Ovary (tissue), 10 donors: ENCODE measurements at regions of chr22 and their contacts with region 1.

Region 1: GRCh38 chr22:32325416-32325801 is 32.3 kb upstream of the RFPL3 start:
- DNase-seq: peak in 1 of 5 donors; percentile 56
- H3K4me3 ChIP-seq: no peak overlapping the region
- H3K27ac ChIP-seq: no peak overlapping the region
- H3K4me1 ChIP-seq: no peaks in the 10 kb centered on the region
- H3K27me3 ChIP-seq: no peaks in the 10 kb centered on the region
- CTCF ChIP-seq: no peak
- EP300 ChIP-seq: no peak
- POLR2A ChIP-seq: no peak

Region 2: GRCh38 chr22:32343941-32344340 is 18.5 kb after region 1 on chr22:
- intact Hi-C with region 1: loop called in 1 of 4 experiments (anchors 2 kb)
- DNase-seq: no peak
- H3K4me3 ChIP-seq: no peak overlapping the region
- H3K27ac ChIP-seq: no peak overlapping the region
- H3K4me1 ChIP-seq: no peaks in the 10 kb centered on the region
- H3K27me3 ChIP-seq: no peaks in the 10 kb centered on the region
- CTCF ChIP-seq: no peak
- EP300 ChIP-seq: no peak
- POLR2A ChIP-seq: no peak